MCF 10A (cell line): ENCODE measurements at regions of chr2 and their contacts with region 1.

Region 1: DNA sequence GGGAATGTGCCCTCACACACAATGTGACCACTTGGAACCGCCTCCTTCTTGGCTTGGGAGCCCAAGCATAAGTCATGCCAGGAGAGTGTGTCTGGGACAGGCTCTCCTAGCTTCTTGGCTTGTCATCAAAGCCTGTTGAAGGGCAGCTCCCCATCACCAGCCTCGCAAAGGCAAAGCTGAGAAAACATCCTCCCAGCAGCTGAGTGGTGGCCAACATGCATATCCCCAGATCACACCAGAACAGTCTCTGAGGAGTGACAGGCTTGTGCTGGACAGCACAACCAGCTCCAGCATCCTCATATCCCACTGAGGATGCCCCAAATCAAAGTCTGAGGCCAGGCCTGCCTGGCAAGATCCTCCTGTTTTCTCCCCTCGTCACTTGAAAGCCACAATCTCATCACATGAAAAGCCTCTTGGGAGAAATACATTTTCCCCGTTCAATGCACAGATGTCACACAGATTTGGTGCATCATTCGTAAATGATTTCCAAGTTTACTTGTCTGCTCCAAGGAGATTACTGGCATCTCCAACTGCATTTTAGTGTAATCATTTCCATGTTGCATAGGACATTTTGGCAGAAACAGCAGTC is 269.3 kb downstream of the TTC32 start:
- DNase-seq: peak; percentile 90
- H3K4me3 Mint-ChIP-seq: no peak overlapping the region
- H3K27ac Mint-ChIP-seq: no peak overlapping the region
- H3K4me1 Mint-ChIP-seq: peaks cover 5% of the 10 kb centered on the region
- H3K27me3 Mint-ChIP-seq: peaks cover 14% of the 10 kb centered on the region
- CTCF ChIP-seq: no peak

Region 2: GRCh38 chr2:19643117-19643518 is 10.6 kb after region 1 on chr2:
- CTCF ChIA-PET with region 1: interaction called, 13 read pairs
- POLR2A ChIA-PET with region 1: interaction called, 4 read pairs
- intact Hi-C with region 1: no loop called
- DNase-seq: no peak
- H3K4me3 Mint-ChIP-seq: no peak overlapping the region
- H3K27ac Mint-ChIP-seq: no peak overlapping the region
- H3K4me1 Mint-ChIP-seq: no peaks in the 10 kb centered on the region
- H3K27me3 Mint-ChIP-seq: no peaks in the 10 kb centered on the region
- CTCF ChIP-seq: no peak